Activated CD8-positive, alpha-beta T cell treated with anti-CD3 and anti-CD28 coated beads for 36 hours (primary cell): ENCODE measurements at regions of chr19 and their contacts with region 1.

Region 1: DNA sequence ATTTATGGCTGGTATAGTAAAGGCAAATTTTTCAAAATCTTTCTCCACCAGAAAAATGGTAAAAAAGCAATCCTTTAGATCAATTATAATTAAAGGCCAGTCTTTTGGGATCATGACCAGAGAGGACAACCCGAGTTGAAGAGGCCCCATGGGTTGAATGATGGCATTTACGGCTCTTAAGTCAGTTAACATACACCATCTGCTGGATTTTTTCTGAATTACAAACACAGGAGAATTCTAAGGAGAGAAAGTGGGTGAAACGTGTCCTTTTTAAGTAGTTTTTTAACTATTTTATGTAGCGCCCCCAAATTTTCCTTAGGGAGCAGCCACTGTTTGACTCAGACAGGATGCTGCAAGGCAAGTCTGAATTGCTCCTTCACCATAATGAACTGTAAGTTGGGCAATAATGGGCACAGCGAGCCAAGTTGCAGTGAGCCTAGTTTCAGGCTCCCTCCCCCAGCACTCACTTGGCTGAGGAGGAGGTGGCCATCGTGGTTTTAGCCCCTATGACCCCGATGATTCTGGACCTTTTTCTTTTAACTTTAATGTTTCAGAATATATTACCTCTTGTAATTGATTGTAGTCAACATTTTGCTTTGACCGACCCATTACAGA is 13.6 kb upstream of the ZNF611 start:
- DNase-seq: peak; percentile 14
- ATAC-seq: peak; percentile 66
- H3K4me3 Mint-ChIP-seq: no peak overlapping the region
- H3K27ac Mint-ChIP-seq: no peak overlapping the region
- H3K4me1 Mint-ChIP-seq: peaks cover 8% of the 10 kb centered on the region
- H3K27me3 Mint-ChIP-seq: no peaks in the 10 kb centered on the region
- CTCF ChIP-seq: peak; percentile 77

Region 2: DNA sequence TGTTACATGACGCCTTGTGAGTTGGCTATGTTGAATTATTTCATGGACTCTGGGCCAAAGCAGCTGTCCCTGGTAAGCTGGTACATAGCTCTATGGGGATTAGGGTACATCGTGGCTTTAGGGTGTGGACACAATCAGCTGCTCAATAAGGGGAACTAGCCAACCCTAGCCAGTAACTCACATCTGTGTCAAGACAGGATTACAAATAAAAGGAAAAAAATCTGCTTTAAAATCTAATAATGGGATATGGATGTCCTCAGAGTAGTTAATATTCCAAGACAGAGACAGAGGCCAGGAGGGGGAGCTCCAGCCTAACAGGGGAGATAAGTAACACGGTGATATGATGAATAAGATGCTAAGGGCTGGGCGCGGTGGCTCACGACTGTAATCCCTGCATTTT is 500.2 kb before region 1 on chr19:
- CTCF ChIA-PET with region 1: interaction called, 3 read pairs
- POLR2A ChIA-PET with region 1: no interaction called
- intact Hi-C with region 1: loop called (anchors 10 kb)
- DNase-seq: peak; percentile 85
- ATAC-seq: peak; percentile 88
- H3K4me3 Mint-ChIP-seq: no peak overlapping the region
- H3K27ac Mint-ChIP-seq: no peak overlapping the region
- H3K4me1 Mint-ChIP-seq: no peaks in the 10 kb centered on the region
- H3K27me3 Mint-ChIP-seq: no peaks in the 10 kb centered on the region
- CTCF ChIP-seq: peak; percentile 70

Region 3: GRCh38 chr19:52343548-52343947 is 404.9 kb before region 1 on chr19:
- CTCF ChIA-PET with region 1: interaction called, 3 read pairs
- POLR2A ChIA-PET with region 1: no interaction called
- intact Hi-C with region 1: loop called (anchors 5 kb)
- DNase-seq: peak; percentile 77
- ATAC-seq: peak; percentile 84
- H3K4me3 Mint-ChIP-seq: no peak overlapping the region
- H3K27ac Mint-ChIP-seq: no peak overlapping the region
- H3K4me1 Mint-ChIP-seq: no peaks in the 10 kb centered on the region
- H3K27me3 Mint-ChIP-seq: no peaks in the 10 kb centered on the region
- CTCF ChIP-seq: peak; percentile 73